Activated CD4-positive, alpha-beta memory T cell treated with anti-CD3 and anti-CD28 coated beads, Interleukin-2, amount 10 ng/mL, durations not matched to agents 7 days and 5 days (primary cell): ENCODE measurements at regions of chr21 and their contacts with region 1.

Region 1: DNA sequence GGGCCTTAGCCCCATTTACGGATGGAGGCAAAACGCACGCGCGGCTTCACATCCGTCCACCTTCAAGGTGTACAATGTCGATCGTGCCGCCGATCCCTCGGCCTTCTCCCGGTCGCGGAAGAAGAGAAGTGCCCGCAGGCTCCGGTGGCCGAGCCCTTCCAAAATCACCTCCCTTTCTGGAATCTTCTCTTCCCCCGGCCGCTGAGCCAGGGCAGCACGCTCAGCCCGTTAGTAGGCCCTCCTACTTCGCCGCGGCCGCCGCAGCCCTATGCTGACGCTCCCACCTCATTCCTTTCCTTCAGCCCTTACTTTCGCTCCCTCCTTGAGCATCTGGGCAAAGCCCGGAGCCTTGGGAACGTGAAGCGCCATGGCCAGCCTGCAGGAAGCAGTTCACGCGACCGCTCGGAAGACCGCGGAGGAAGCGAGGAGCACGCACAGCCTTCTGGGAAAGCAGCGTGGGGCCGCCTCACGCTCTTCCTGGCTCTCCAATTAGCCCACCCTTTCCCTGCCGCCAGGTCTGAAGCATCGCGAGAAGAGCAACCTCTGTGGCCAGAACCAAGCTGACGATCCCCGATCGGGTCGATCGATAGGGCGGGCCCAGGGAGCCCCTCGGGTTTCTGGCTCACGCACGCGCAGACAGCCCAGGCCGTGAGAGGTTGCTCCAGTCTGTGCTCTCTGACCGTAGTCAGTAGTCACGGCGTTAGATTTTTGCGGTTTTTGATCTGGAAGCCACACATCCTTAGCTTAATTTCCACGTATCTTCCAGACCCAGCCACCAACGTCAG is at the start of gene CCT8:
- DNase-seq: peak; percentile 99
- H3K4me3 Mint-ChIP-seq: peak within 1 kb of the TSS; percentile 97
- H3K27ac Mint-ChIP-seq: peak within 1 kb of the TSS; percentile 93
- H3K4me1 Mint-ChIP-seq: peaks cover 59% of the 10 kb centered on the region
- H3K27me3 Mint-ChIP-seq: no peaks in the 10 kb centered on the region
- total RNA-seq, gene CCT8: 214 to 216 TPM

Region 2: GRCh38 chr21:28992526-28993292 is 80.7 kb before region 1 on chr21 and contains the start of gene LTN1:
- CTCF ChIA-PET with region 1: interaction called, 4 read pairs
- POLR2A ChIA-PET with region 1: interaction called, 49 read pairs
- DNase-seq: peak; percentile 99
- H3K4me3 Mint-ChIP-seq: peak within 1 kb of the TSS; percentile 86
- H3K27ac Mint-ChIP-seq: peak within 1 kb of the TSS; percentile 94
- H3K4me1 Mint-ChIP-seq: peaks cover 44% of the 10 kb centered on the region
- H3K27me3 Mint-ChIP-seq: no peaks in the 10 kb centered on the region
- total RNA-seq, gene LTN1: 25.8 to 26.5 TPM

Region 3: DNA sequence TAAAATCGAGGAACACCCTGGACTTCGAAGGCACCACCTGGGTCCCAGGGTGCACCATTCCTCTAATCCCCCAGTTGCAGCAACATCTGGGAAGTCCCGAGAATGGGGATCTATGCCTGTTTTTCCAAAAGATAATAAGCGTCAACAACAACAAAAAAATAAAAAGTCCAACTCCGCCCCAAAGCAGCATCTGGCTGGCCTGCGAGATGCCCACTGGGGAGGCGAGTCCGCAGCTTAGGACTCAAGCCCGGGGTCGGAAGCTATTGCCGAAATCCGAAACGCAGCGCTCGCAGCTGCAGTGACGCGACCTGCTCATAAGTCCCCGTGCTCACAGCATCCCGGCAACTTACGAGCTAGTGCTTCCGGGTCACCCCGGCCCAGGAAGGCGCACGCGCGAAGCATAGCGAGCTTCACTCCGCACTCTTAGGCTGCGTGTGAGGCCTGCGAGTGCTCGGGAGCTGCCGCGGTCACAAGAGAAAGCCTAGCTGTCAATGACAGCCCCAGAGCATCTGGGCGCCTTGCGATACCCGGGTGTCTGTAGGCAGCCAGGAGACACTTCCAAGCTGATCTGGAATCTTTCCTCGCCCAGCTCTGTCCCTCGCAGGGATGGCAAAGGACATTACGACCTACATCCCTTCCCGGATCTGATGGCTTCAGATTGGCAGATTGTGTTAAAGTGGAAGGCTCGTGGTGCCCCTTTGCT is 70.8 kb before region 1 on chr21:
- CTCF ChIA-PET with region 1: interaction called, 7 read pairs
- POLR2A ChIA-PET with region 1: interaction called, 26 read pairs
- DNase-seq: peak; percentile 96
- H3K4me3 Mint-ChIP-seq: peak overlapping the region; percentile 86
- H3K27ac Mint-ChIP-seq: peak overlapping the region; percentile 93
- H3K4me1 Mint-ChIP-seq: peaks cover 13% of the 10 kb centered on the region
- H3K27me3 Mint-ChIP-seq: no peaks in the 10 kb centered on the region

Region 4: GRCh38 chr21:29245104-29245643 is 171.8 kb after region 1 on chr21:
- CTCF ChIA-PET with region 1: no interaction called
- POLR2A ChIA-PET with region 1: no interaction called
- DNase-seq: no peak
- H3K4me3 Mint-ChIP-seq: no peak overlapping the region
- H3K27ac Mint-ChIP-seq: no peak overlapping the region
- H3K4me1 Mint-ChIP-seq: peaks cover 4% of the 10 kb centered on the region
- H3K27me3 Mint-ChIP-seq: peaks cover 27% of the 10 kb centered on the region